ENCODE measurements at regions of chr14 and their contacts with region 1.

Region 1: DNA sequence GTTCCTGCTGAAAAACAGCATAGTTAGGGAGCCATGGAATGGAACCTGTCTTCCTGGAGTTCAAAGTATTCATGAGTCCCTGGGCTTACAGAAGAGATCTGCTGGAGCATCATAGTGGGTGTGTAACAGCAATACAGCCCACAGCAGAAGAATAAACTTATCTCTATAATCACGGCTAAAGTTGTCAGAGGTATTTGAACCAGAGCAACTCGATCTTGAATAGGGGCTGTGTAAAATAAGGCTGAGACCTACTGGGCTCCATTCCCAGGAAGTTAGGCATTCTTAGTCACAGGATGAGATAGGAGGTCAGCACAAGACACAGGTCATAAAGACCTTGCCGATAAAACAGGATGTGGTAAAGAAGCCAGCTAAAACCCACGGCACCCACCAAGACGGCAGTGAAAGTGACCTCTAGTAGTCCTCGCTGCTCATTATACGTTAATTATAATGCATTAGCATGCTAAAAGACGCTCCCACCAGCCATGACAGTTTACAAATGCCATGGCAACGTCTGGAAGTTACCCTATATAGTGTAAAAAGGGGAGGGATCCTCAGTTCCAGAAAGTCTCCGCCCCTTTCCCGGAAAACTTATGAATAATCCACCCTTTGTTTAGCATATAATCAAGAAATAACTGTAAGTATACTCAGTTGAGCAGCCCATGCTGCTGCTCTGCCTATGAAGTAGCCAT is 223.4 kb downstream of the PCNX1 start:
- DNase-seq: peak; percentile 81
- ATAC-seq: peak; percentile 84
- H3K4me3 ChIP-seq: peak overlapping the region; percentile 19
- H3K27ac ChIP-seq: peak overlapping the region; percentile 79
- H3K4me1 ChIP-seq: peaks cover 18% of the 10 kb centered on the region
- H3K27me3 ChIP-seq: no peaks in the 10 kb centered on the region
- CTCF ChIP-seq: no peak

Region 2: GRCh38 chr14:70748422-70748821 is 382.2 kb before region 1 on chr14:
- CTCF ChIA-PET with region 1: no interaction called
- POLR2A ChIA-PET with region 1: no interaction called
- intact Hi-C with region 1: no loop called
- DNase-seq: no peak
- ATAC-seq: no peak
- H3K4me3 ChIP-seq: no peak overlapping the region
- H3K27ac ChIP-seq: no peak overlapping the region
- H3K4me1 ChIP-seq: peaks cover 5% of the 10 kb centered on the region
- H3K27me3 ChIP-seq: no peaks in the 10 kb centered on the region
- CTCF ChIP-seq: no peak

Region 3: GRCh38 chr14:71103662-71104484 is 26.8 kb before region 1 on chr14:
- CTCF ChIA-PET with region 1: no interaction called
- POLR2A ChIA-PET with region 1: no interaction called
- intact Hi-C with region 1: loop called (anchors 1 kb)
- DNase-seq: peak; percentile 78
- ATAC-seq: peak; percentile 89
- H3K4me3 ChIP-seq: no peak overlapping the region
- H3K27ac ChIP-seq: no peak overlapping the region
- H3K4me1 ChIP-seq: peaks cover 7% of the 10 kb centered on the region; the same call in 1 of the 2 replicates
- H3K27me3 ChIP-seq: no peaks in the 10 kb centered on the region
- CTCF ChIP-seq: peak; percentile 96